Adrenal gland (tissue), 19 donors: ENCODE measurements at regions of chr19 and their contacts with region 1.

Region 1: DNA sequence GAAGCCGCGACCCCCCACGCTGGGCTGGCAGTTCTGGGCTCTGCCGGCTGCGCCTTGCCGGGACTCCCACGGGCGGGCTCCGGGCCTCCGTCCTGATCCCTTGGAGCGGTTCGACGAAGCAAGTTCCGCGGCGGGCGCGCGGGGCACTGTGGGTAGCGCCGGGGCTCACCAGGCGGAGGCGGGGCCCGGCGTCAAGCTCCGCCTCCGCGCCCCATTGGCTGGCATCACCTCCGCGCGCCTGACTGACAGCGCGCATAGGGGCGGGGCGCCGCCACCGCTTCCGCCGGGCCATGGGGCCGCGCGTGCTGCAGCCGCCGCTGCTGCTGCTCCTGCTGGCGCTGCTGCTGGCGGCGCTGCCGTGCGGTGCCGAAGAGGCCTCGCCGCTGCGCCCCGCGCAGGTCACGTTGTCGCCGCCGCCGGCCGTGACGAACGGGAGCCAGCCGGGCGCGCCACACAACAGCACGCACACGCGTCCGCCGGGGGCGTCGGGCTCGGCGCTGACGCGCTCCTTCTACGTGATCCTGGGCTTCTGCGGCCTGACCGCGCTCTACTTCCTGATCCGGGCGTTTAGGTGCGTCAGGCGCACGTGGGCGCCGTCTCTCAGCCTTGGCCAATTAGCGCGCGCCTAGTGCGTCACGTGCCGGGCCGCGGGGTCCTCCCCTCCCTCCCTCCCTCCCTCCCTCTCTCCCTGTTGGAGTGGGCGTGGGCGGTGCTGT is at the start of gene FAM174C:
- DNase-seq: peak; percentile 95 to 98 (median 97)
- H3K4me3 ChIP-seq: peak within 1 kb of the TSS in 2 of 4 donors; percentile 31 to 78
- H3K27ac ChIP-seq: peak within 1 kb of the TSS; percentile 51 to 99 (median 98)
- H3K4me1 ChIP-seq: peaks cover 40 to 58% of the 10 kb centered on the region in 2 donors
- H3K27me3 ChIP-seq: no peaks in the 10 kb centered on the region
- CTCF ChIP-seq: peak in 2 of 6 experiments; percentile 3 to 23
- POLR2A ChIP-seq: peak; percentile 70 to 74
- total RNA-seq, gene FAM174C: 48.4 to 279 (median 85.0) TPM

Region 2: GRCh38 chr19:1383311-1384084 is 108.1 kb after region 1 on chr19 and contains the start of gene NDUFS7:
- intact Hi-C with region 1: loop called in 1 of 2 experiments (anchors 10 kb)
- DNase-seq: peak; percentile 90 to 95 (median 90)
- H3K4me3 ChIP-seq: peak within 1 kb of the TSS; percentile 12 to 87 (median 84)
- H3K27ac ChIP-seq: peak within 1 kb of the TSS; percentile 67 to 91 (median 80)
- H3K4me1 ChIP-seq: peaks cover 28 to 35% of the 10 kb centered on the region in 2 donors
- H3K27me3 ChIP-seq: no peaks in the 10 kb centered on the region
- CTCF ChIP-seq: peak in 4 of 6 experiments; percentile 43 to 67 (median 56)
- POLR2A ChIP-seq: peak; percentile 32 to 45
- total RNA-seq, gene NDUFS7: 102 to 286 (median 150) TPM

Region 3: GRCh38 chr19:1438035-1438932 is 162.9 kb after region 1 on chr19 and contains the start of gene RPS15:
- intact Hi-C with region 1: loop called in 1 of 2 experiments (anchors 10 kb)
- DNase-seq: peak; percentile 93 to 97 (median 95)
- H3K4me3 ChIP-seq: peak within 1 kb of the TSS; percentile 5 to 95 (median 84)
- H3K27ac ChIP-seq: peak within 1 kb of the TSS; percentile 64 to 94 (median 83)
- H3K4me1 ChIP-seq: peaks cover 9 to 19% of the 10 kb centered on the region in 2 donors
- H3K27me3 ChIP-seq: no peaks in the 10 kb centered on the region
- CTCF ChIP-seq: peak; percentile 70 to 96 (median 89)
- POLR2A ChIP-seq: peak; percentile 89 to 93
- total RNA-seq, gene RPS15: 780 to 3,934 (median 1,471) TPM

Region 4: GRCh38 chr19:1513499-1514294 is 238.3 kb after region 1 on chr19:
- intact Hi-C with region 1: loop called in 1 of 2 experiments (anchors 10 kb)
- DNase-seq: peak in 2 of 7 donors; percentile 35 to 36
- H3K4me3 ChIP-seq: peak overlapping the region in 1 of 4 donors; percentile 57
- H3K27ac ChIP-seq: peak overlapping the region in 1 of 5 donors; percentile 30
- H3K4me1 ChIP-seq: peaks cover 4 to 7% of the 10 kb centered on the region in 2 donors
- H3K27me3 ChIP-seq: peaks cover 22% of the 10 kb centered on the region
- CTCF ChIP-seq: peak; percentile 27 to 55 (median 46)
- POLR2A ChIP-seq: no peak